ENCODE measurements at regions of chr21 and their contacts with region 1.

Region 1: GRCh38 chr21:36156339-36156814 is 247 bp upstream of the DOP1B start:
- DNase-seq: peak; percentile 99 to 100 (median 100)
- H3K4me3 ChIP-seq: peak overlapping the region; percentile 71
- H3K27ac ChIP-seq: peak overlapping the region in 1 of 2 donors; percentile 32
- H3K4me1 ChIP-seq: peaks cover 7% of the 10 kb centered on the region
- H3K27me3 ChIP-seq: no peaks in the 10 kb centered on the region
- CTCF ChIP-seq: no peak
- EP300 ChIP-seq: no peak
- POLR2A ChIP-seq: no peak

Region 2: GRCh38 chr21:36235058-36235582 is 78.7 kb after region 1 on chr21:
- intact Hi-C with region 1: no loop called
- DNase-seq: no peak
- H3K4me3 ChIP-seq: no peak overlapping the region
- H3K27ac ChIP-seq: no peak overlapping the region
- H3K4me1 ChIP-seq: peaks cover 1% of the 10 kb centered on the region
- H3K27me3 ChIP-seq: no peaks in the 10 kb centered on the region
- CTCF ChIP-seq: no peak
- EP300 ChIP-seq: no peak
- POLR2A ChIP-seq: no peak

Region 3: GRCh38 chr21:36260030-36260787 is 103.8 kb after region 1 on chr21:
- intact Hi-C with region 1: loop called in 1 of 4 experiments (anchors 10 kb)
- DNase-seq: peak in 3 of 5 donors; percentile 24 to 59 (median 41)
- H3K4me3 ChIP-seq: peak overlapping the region; percentile 43
- H3K27ac ChIP-seq: peak overlapping the region in 1 of 2 donors; percentile 66
- H3K4me1 ChIP-seq: no peaks in the 10 kb centered on the region
- H3K27me3 ChIP-seq: no peaks in the 10 kb centered on the region
- CTCF ChIP-seq: peak; percentile 54 to 75 (median 60)
- EP300 ChIP-seq: no peak
- POLR2A ChIP-seq: no peak

Region 4: GRCh38 chr21:36319765-36320420 is 163.5 kb after region 1 on chr21 and contains the start of gene MORC3:
- intact Hi-C with region 1: loop called in 1 of 4 experiments (anchors 10 kb)
- DNase-seq: peak; percentile 97 to 99 (median 98)
- H3K4me3 ChIP-seq: peak within 1 kb of the TSS; percentile 96
- H3K27ac ChIP-seq: peak within 1 kb of the TSS; percentile 89 to 99
- H3K4me1 ChIP-seq: peaks cover 7% of the 10 kb centered on the region
- H3K27me3 ChIP-seq: no peaks in the 10 kb centered on the region
- CTCF ChIP-seq: no peak
- EP300 ChIP-seq: no peak
- POLR2A ChIP-seq: peak; percentile 84
- total RNA-seq, gene MORC3: 35.4 to 55.6 (median 39.1) TPM

Measured in ovary (tissue), 10 donors.